Heart left ventricle (tissue), 16 donors: ENCODE measurements at regions of chr17 and their contacts with region 1.

Region 1: GRCh38 chr17:32664936-32665583 is 178.3 kb downstream of the CDK5R1 start:
- DNase-seq: no peak
- ATAC-seq: peak in 1 of 4 donors; percentile 29
- H3K4me3 ChIP-seq: no peak overlapping the region
- H3K27ac ChIP-seq: no peak overlapping the region
- H3K4me1 ChIP-seq: no peaks in the 10 kb centered on the region
- H3K27me3 ChIP-seq: no peaks in the 10 kb centered on the region
- CTCF ChIP-seq: no peak
- POLR2A ChIP-seq: no peak

Region 2: GRCh38 chr17:32693194-32693897 is 28.3 kb after region 1 on chr17:
- intact Hi-C with region 1: no loop called
- DNase-seq: no peak
- ATAC-seq: no peak
- H3K4me3 ChIP-seq: no peak overlapping the region
- H3K27ac ChIP-seq: no peak overlapping the region
- H3K4me1 ChIP-seq: no peaks in the 10 kb centered on the region
- H3K27me3 ChIP-seq: no peaks in the 10 kb centered on the region
- CTCF ChIP-seq: no peak
- POLR2A ChIP-seq: no peak

Region 3: DNA sequence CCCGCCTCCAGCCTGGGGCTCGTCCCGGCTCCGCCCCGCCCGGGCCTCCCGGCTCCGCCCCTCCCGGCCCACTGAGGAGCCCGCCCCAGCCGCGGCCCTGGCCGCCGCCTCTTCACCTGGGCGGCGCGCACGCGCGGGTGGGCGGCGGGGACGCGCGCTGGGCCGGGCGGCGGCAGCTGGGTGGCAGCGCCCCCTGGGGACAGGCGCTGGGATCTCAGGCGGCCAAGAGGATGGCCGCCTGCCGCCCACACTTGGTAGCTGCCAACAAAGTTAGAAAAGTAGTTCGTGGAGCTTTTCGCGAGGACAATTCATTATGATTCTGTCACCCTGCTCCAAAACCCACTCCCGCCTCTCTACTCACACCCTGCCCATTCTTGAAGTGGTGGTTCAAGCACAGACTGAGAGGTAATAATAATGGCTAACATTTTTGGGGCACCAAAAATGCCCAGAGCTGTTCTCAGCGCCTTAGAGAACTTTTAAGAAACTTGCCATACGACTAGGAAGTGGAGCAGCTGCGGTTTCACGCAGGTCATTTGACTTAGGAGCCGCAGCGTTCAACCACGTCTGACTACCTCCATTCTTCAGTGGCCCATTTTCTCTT is 212.2 kb after region 1 on chr17:
- intact Hi-C with region 1: loop called in 1 of 10 experiments (anchors 5 kb)
- DNase-seq: peak; percentile 90 to 96 (median 93)
- ATAC-seq: peak; percentile 96 to 100 (median 100)
- H3K4me3 ChIP-seq: peak overlapping the region in 11 of 12 donors; percentile 71 to 93 (median 80)
- H3K27ac ChIP-seq: peak overlapping the region in 11 of 12 donors; percentile 61 to 90 (median 81)
- H3K4me1 ChIP-seq: peaks cover 0 to 27% (median 9%) of the 10 kb centered on the region in 12 donors
- H3K27me3 ChIP-seq: peaks cover 0 to 5% (median 0%) of the 10 kb centered on the region in 9 donors
- CTCF ChIP-seq: peak; percentile 64 to 96 (median 85)
- POLR2A ChIP-seq: no peak